G401 (cell line): ENCODE measurements at regions of chr11 and their contacts with region 1.

Region 1: DNA sequence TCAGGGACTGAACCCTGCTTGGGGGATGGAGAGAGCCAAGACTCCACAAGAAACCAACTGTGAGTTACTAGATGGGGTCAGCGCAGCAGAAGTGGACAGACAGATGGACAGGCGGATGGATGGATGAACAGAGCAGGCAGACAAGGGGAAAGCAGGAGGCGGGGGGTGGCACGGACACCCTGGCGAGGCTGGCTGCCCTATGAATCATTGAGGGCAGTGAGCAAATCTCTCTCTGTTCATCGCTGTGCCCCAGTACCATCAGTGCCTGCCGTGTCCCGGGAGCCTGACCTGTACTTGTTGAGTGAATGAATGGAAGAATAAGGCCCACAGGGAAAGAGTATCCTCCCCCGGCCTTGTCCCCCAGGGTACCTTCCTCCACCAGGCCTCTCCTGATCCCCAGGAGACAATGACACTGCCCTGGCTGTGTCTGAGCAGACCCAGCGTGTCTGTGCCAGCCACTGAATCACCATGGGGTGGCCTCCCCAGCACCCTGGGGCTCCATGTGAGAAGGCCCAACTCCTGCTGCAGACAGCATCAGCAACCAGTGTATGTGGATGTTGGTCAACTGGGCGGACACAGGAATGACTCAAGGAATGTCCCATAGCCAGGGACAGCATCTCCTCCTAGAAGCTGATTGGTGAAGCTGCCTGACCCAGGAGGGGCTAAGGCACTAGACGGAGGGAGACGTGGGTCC is 5.1 kb upstream of the KLHL35 start:
- DNase-seq: no peak

Region 2: DNA sequence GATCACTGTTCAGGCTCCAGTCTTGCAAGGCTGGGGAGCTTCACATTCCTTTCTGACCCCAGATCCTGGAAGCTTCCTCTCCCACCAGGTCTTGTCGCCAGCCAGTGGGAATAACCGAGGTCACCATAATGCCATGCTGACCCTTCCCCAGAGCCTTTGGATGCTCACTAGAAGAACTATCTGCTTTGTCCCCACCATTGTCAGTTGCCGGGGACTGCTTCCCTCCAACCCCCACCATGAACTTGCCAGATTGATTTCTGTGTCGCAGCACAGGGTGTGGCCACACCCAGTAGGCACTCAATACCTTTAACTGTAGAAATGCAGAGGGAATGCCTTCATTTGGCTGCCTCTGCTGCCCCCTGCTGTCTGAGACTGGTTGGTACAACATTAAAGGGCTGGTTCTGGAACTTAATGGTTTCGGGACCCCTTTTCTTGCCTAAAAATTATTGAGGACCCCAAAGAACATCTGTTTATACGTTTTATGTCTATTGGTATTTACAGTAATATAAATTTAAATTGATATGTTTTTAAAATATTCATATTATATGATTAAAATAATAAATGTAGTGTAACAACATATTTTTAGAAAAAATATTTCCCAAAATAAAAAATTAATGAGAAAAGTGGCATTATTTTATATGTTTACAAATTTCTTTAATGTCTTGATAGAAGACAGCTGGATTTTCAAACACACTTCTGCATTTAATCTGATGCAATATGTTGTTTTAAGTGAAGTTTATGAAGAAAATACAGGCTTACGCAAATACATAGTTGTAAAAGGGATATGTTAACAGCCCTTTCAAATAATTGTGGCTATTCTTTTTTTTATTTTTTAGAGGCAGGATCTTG is 94.3 kb after region 1 on chr11:
- in situ Hi-C with region 1: loop called (anchors 5 kb)
- DNase-seq: peak; percentile 84